ENCODE measurements at regions of chr1 and their contacts with region 1.

Region 1: GRCh38 chr1:31296486-31297276 is at the starts of genes SNRNP40 and ZCCHC17:
- DNase-seq: peak; percentile 97 to 98
- H3K4me3 ChIP-seq: peak within 1 kb of the TSS; percentile 84 to 93
- H3K27ac ChIP-seq: peak within 1 kb of the TSS; percentile 89 to 90
- H3K4me1 ChIP-seq: peaks cover 4 to 29% of the 10 kb centered on the region in 2 donors
- H3K27me3 ChIP-seq: no peaks in the 10 kb centered on the region
- CTCF ChIP-seq: peak in 1 of 3 experiments; percentile 23
- total RNA-seq, gene SNRNP40: 11.8 TPM
- total RNA-seq, gene ZCCHC17: 9.7 TPM

Region 2: DNA sequence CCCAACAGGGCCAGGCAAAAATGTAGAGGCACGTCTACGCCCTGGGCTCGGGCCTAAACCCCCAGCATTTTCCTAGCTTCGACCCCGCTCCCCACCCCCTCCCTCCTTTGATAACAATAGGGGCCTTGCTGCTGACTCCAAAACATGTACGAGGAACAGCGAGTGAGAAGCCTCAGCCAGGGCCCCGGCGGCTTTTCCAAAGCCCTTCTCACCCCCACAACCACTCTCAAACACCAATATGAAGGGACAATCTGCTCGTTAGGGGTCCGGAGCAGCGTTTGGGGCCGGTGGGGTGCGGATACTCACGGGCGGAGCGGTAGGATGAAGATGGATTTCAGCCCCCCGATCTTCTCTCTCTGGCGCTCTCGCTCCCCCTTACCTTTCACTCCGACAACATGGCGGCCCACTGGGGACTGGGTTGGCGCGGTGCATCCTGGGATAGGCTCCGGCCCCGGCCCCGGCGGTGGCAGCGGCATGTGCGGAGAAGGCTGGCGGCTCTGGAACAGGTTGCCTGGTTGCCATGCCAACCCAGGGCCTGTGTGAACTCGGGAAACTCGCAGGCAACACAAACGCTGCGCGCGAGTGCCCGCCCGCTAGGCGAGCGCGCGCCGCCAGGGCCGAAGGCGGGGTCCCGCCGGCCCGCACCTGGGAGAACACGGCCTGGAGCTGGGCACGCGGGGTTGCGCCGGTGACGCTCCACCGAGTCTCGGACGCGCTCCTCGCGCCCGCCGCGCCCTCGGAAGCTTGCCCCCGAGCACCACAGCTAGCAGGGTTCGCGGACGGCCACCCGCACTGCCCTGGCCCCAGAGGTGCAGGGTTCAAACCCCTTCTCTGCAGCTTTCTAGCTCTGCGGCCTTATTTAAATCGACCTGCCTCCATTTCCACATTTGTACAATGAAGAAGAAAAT is 231.1 kb before region 1 on chr1 and contains the start of gene PUM1:
- intact Hi-C with region 1: loop called (anchors 10 kb)
- DNase-seq: peak; percentile 95 to 99
- H3K4me3 ChIP-seq: peak within 1 kb of the TSS; percentile 60 to 74
- H3K27ac ChIP-seq: peak within 1 kb of the TSS; percentile 78 to 91
- H3K4me1 ChIP-seq: peaks cover 0 to 21% of the 10 kb centered on the region in 2 donors
- H3K27me3 ChIP-seq: no peaks in the 10 kb centered on the region
- CTCF ChIP-seq: peak in 1 of 3 experiments; percentile 21
- total RNA-seq, gene PUM1: 52.3 TPM

Region 3: GRCh38 chr1:31155216-31155841 is 141.4 kb before region 1 on chr1:
- intact Hi-C with region 1: loop called (anchors 5 kb)
- DNase-seq: peak in 1 of 2 donors; percentile 72
- H3K4me3 ChIP-seq: peak overlapping the region; percentile 52 to 90
- H3K27ac ChIP-seq: peak overlapping the region; percentile 82 to 88
- H3K4me1 ChIP-seq: peaks cover 0 to 7% of the 10 kb centered on the region in 2 donors
- H3K27me3 ChIP-seq: no peaks in the 10 kb centered on the region
- CTCF ChIP-seq: peak in 2 of 3 experiments; percentile 29 to 35

Region 4: DNA sequence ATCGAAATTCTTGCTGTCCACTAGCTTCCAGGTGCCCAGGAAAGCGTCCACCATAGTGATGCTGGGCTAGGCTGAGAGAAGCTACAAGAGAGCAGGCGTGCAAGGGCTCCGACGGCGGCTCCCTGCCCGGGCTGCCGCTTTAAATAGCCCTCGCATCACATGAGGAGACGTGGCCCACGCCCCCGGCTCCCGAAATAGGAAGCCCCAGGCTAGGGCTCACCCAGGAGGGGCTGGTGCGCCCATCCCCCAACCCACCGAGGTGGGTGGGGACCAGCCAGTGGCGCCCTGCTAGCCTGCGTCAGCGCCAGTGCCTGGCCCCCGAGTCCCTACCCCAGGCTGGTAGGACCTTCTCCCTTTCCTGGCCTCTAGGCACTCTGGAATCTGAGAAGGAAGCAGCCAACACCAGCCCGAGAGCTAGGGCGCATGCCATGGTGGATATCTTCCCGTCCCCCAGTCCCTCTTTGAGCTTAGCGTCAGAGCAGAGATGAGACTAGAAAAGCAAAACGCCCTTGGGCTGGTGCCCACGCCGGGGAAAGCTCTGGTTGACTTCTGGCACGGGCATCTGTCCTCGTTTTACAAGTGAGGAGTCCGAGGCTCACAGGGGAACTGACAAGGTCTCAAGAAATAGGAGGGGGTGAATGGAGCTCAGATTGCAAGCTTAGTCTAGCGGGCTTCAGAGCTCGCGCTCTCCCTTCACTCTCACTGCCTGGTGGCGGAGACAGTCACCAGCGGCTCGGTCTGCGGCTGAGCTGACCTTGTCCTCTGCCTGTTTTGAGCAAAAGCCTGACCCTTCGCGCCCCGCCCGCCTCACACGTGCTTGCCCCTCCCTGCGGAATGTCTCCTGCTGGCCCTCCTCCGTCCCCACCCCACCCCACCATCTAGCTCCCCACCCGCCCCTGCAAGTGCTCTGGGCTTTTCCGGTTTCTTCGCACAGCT is 76.5 kb after region 1 on chr1 and contains the start of gene FABP3:
- intact Hi-C with region 1: loop called (anchors 2 kb)
- DNase-seq: peak; percentile 59 to 90
- H3K4me3 ChIP-seq: peak within 1 kb of the TSS; percentile 52 to 72
- H3K27ac ChIP-seq: peak within 1 kb of the TSS; percentile 90 to 95
- H3K4me1 ChIP-seq: peaks cover 13 to 46% of the 10 kb centered on the region in 2 donors
- H3K27me3 ChIP-seq: no peaks in the 10 kb centered on the region
- CTCF ChIP-seq: no peak
- total RNA-seq, gene FABP3: 24.2 TPM

Region 5: DNA sequence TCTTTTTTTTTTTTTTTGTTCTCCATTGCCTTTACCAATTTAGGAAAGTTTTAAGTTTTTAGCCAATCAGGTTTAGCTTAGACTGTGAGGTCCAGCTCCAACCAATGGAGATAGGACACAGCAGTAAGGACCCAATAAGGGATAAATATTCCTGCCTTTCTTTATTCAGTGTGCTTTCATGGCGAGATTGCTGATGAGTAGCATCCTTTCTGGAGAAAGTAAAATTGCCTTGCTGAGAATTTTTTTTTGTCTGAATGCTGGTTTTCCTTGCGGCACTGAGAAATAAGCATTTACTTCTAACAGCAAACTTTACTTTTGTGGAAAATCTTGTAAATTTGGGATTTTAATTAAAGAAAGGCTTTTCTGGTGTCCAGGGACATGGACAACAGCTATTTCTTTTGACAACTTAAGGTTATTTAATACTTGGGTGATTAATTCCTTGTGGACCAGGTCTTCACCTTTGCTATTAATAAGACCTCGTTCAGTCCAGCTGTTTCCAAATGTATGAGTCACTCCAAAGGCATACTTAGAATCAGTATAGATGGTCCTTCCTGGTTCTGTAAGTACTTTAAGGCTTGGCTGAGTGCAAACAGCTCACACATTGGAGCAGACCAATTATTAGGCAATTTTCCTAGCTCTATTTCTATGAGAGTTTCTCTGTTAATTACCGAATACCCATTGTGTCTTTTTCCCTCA is 170.5 kb after region 1 on chr1:
- intact Hi-C with region 1: no loop called
- DNase-seq: no peak
- H3K4me3 ChIP-seq: no peak overlapping the region
- H3K27ac ChIP-seq: no peak overlapping the region
- H3K4me1 ChIP-seq: no peaks in the 10 kb centered on the region
- H3K27me3 ChIP-seq: no peaks in the 10 kb centered on the region
- CTCF ChIP-seq: no peak